AG04449 (cell line): ENCODE measurements at regions of chr9 and their contacts with region 1.

Region 1: DNA sequence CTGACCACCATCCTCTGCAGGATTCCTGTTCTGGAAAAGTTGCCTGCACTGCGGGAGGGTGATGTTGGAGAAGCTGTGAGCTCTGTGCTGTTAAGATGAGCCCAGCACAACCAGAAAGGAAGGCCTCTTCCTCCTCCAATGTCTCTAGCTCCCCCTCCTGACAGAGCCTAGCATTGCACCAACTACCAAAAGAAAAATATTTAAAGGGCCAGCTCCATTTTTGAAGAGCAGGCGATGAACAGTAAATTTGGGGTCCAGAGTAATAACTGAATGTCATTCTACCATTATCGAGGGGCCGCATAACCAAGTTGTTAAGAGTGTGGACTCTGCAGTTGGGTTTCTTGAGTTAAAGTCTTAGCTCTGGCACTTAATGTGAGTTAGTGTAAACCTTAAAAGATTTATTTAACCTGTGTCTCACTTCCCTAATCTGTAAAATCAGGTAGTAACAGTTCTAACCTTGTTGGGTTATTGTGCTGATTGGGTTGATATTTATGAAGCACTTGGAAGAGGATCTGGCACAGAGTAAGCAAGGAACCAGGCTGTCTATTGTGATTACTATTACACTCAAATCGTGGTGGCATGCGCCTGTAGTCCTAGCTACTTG is 3.9 kb downstream of the TEX53 start:
- DNase-seq: no peak
- H3K4me3 ChIP-seq: no peak overlapping the region
- CTCF ChIP-seq: peak; percentile 82

Region 2: DNA sequence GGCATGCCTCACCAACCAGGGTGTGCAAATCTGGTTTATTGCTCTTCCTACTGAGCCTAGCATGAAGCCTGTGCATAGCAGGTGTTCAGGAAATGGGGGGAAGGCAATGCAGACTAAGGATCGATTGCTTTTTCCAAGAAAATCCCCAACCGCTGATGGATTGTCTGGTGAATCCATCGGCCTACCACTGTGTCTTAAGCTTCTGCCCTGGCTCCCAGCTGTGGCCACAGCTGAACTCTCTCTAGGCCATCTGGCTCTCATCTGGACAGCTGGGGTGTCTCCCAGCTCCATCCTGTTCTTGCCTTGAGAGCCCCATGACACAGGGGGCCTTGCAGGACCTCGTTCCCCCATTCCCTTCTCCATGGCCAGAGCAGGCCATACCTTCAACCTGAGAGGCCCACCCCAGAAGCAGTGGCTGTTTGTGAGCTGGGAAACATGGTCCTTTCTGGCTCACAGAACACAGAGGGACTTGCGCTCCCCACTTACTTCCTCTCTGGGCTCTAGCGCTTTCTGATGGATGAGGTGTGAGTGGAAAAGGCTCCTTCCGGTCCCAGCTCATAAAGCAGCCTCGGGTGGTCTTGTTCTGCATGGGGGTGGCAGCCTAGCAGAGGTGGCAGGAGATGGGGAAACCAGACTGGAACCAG is 456.6 kb before region 1 on chr9:
- CTCF ChIA-PET with region 1: no interaction called
- POLR2A ChIA-PET with region 1: no interaction called
- DNase-seq: no peak
- H3K4me3 ChIP-seq: no peak overlapping the region
- CTCF ChIP-seq: no peak

Region 3: GRCh38 chr9:114405294-114406034 is 248.2 kb before region 1 on chr9:
- CTCF ChIA-PET with region 1: interaction called, 238 read pairs
- POLR2A ChIA-PET with region 1: interaction called, 3 read pairs
- DNase-seq: no peak
- H3K4me3 ChIP-seq: no peak overlapping the region
- CTCF ChIP-seq: peak; percentile 82

Region 4: GRCh38 chr9:114446036-114446435 is 207.6 kb before region 1 on chr9:
- CTCF ChIA-PET with region 1: interaction called, 367 read pairs
- POLR2A ChIA-PET with region 1: no interaction called
- DNase-seq: no peak
- H3K4me3 ChIP-seq: no peak overlapping the region
- CTCF ChIP-seq: no peak

Region 5: DNA sequence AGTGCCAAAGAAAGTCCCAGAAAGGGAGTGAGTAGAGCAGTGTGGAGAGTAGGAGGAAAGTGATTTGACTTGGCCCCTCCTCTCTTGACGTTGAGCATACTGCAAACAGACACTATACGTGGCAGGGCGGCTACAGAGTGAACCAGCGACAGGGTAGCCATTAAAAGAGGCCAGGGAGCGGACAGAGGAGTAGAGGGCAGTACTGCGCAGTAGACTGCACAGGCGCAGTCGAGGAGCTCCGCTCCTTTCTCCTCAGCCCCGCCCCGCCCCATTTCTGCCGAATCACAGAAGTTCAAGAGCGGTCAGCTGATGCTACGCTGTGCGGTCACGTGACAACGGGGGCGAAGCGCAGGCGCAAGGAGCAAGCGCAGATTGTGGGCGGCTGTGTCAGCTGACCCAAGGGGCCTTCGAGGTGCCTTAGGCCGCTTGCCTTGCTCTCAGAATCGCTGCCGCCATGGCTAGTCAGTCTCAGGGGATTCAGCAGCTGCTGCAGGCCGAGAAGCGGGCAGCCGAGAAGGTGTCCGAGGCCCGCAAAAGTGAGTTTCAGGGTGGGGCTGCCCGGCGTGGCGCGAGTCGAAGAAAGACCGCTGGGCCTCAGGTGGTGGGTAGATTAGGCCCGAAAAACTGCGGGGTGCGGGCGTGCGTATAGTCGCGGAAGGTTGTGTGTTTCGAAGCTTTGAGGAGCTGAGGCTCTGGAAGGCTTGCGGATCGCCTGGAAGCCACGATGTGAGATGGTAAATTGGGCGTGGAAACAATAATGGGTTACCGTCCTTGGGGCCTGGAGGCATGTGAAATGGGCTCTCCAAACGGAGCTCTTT is 66.1 kb before region 1 on chr9 and contains the start of gene ATP6V1G1:
- CTCF ChIA-PET with region 1: interaction called, 18 read pairs
- POLR2A ChIA-PET with region 1: interaction called, 3 read pairs
- DNase-seq: peak; percentile 94
- H3K4me3 ChIP-seq: peak within 1 kb of the TSS; percentile 99
- CTCF ChIP-seq: peak; percentile 29

Region 6: DNA sequence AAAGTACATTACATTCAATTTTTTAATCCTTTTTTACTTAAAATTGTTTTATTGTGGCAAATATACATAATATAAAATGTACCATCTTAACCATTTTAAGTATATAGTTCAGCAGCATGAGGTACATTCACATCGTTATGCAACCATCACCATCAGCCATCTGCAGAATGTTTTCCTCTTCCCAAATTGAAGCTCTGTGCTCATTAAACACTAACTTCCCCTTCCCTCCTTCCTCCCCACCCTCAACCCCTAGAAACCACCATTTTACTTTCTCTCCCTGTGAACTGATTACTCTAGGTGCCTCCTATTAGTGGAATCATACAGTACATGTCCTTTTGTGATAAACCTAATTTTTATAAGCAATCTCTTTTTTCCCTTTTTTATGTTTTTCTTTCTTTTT is 11.7 kb before region 1 on chr9:
- CTCF ChIA-PET with region 1: interaction called, 57 read pairs
- POLR2A ChIA-PET with region 1: no interaction called
- DNase-seq: no peak
- H3K4me3 ChIP-seq: no peak overlapping the region
- CTCF ChIP-seq: no peak

Region 7: GRCh38 chr9:115008536-115009270 is 355.0 kb after region 1 on chr9:
- CTCF ChIA-PET with region 1: interaction called, 11 read pairs
- POLR2A ChIA-PET with region 1: no interaction called
- DNase-seq: peak; percentile 65
- H3K4me3 ChIP-seq: no peak overlapping the region
- CTCF ChIP-seq: no peak